WTC11 (cell line): ENCODE measurements at regions of chr2 and their contacts with region 1.

Region 1: GRCh38 chr2:239143858-239144718 is 256.7 kb downstream of the HDAC4 start:
- DNase-seq: peak; percentile 53
- ATAC-seq: peak; percentile 87
- H3K4me3 Mint-ChIP-seq: no peak overlapping the region
- H3K27ac Mint-ChIP-seq: no peak overlapping the region
- H3K4me1 Mint-ChIP-seq: no peaks in the 10 kb centered on the region
- H3K27me3 Mint-ChIP-seq: no peaks in the 10 kb centered on the region
- CTCF ChIP-seq: peak; percentile 55

Region 2: GRCh38 chr2:239015218-239015900 is 128.7 kb before region 1 on chr2:
- CTCF ChIA-PET with region 1: no interaction called
- POLR2A ChIA-PET with region 1: no interaction called
- DNase-seq: no peak
- ATAC-seq: no peak
- H3K4me3 Mint-ChIP-seq: no peak overlapping the region
- H3K27ac Mint-ChIP-seq: no peak overlapping the region
- H3K4me1 Mint-ChIP-seq: no peaks in the 10 kb centered on the region
- H3K27me3 Mint-ChIP-seq: 0 out of 2 replicates have a peak, but pooled peaks cover 2% of the 10 kb centered on the region
- CTCF ChIP-seq: no peak

Region 3: GRCh38 chr2:239121600-239122012 is 22.5 kb before region 1 on chr2:
- CTCF ChIA-PET with region 1: no interaction called
- POLR2A ChIA-PET with region 1: no interaction called
- DNase-seq: no peak
- ATAC-seq: no peak
- H3K4me3 Mint-ChIP-seq: no peak overlapping the region
- H3K27ac Mint-ChIP-seq: no peak overlapping the region
- H3K4me1 Mint-ChIP-seq: no peaks in the 10 kb centered on the region
- H3K27me3 Mint-ChIP-seq: no peaks in the 10 kb centered on the region
- CTCF ChIP-seq: no peak

Region 4: DNA sequence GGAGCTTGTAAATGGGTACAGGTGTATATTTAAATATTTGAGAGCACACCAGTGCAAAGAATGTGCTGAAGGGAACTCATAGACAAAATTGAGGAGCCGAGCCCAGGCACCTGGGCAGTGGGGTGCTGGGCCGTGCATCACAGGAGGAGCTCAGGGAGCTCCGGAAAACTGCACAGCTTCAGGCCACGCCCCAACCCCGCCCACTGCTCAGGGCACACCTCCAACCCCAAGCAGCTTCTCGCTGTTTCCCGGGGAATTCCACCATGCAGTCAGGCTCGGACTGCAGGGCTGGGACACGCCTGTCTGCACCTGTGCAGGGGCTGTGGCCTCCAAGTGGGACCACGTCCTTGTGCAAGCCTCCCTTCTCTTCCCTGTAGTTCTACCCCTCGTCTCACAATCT is 13.7 kb after region 1 on chr2:
- CTCF ChIA-PET with region 1: interaction called, 12 read pairs
- POLR2A ChIA-PET with region 1: no interaction called
- DNase-seq: peak; percentile 82
- ATAC-seq: peak; percentile 94
- H3K4me3 Mint-ChIP-seq: no peak overlapping the region
- H3K27ac Mint-ChIP-seq: no peak overlapping the region
- H3K4me1 Mint-ChIP-seq: peaks cover 10% of the 10 kb centered on the region
- H3K27me3 Mint-ChIP-seq: no peaks in the 10 kb centered on the region
- CTCF ChIP-seq: no peak

Region 5: GRCh38 chr2:239735131-239735828 is 591.2 kb after region 1 on chr2:
- CTCF ChIA-PET with region 1: no interaction called
- POLR2A ChIA-PET with region 1: no interaction called
- DNase-seq: peak; percentile 39
- ATAC-seq: peak; percentile 69
- H3K4me3 Mint-ChIP-seq: no peak overlapping the region
- H3K27ac Mint-ChIP-seq: no peak overlapping the region
- H3K4me1 Mint-ChIP-seq: peaks cover 8% of the 10 kb centered on the region; the same call in 1 of the 2 replicates
- H3K27me3 Mint-ChIP-seq: no peaks in the 10 kb centered on the region
- CTCF ChIP-seq: no peak